Naive thymus-derived CD4-positive, alpha-beta T cell (primary cell): ENCODE measurements at regions of chr13 and their contacts with region 1.

Region 1: GRCh38 chr13:74287724-74288169 is 153.5 kb upstream of the KLF12 start:
- DNase-seq: peak; percentile 40 to 98 (median 90)
- ATAC-seq: peak; percentile 74
- H3K4me3 ChIP-seq: peak overlapping the region; percentile 51
- H3K4me3 Mint-ChIP-seq: peak overlapping the region; percentile 68 to 91 (median 82)
- H3K27ac ChIP-seq: peak overlapping the region; percentile 82
- H3K27ac Mint-ChIP-seq: peak overlapping the region; percentile 79 to 96 (median 94)
- H3K4me1 ChIP-seq: peaks cover 26 to 48% of the 10 kb centered on the region in 2 donors
- H3K4me1 Mint-ChIP-seq: peaks cover 41 to 77% (median 71%) of the 10 kb centered on the region in 7 donors
- H3K27me3 ChIP-seq: no peaks in the 10 kb centered on the region
- H3K27me3 Mint-ChIP-seq: peaks cover 0 to 2% (median 0%) of the 10 kb centered on the region in 5 donors

Region 2: DNA sequence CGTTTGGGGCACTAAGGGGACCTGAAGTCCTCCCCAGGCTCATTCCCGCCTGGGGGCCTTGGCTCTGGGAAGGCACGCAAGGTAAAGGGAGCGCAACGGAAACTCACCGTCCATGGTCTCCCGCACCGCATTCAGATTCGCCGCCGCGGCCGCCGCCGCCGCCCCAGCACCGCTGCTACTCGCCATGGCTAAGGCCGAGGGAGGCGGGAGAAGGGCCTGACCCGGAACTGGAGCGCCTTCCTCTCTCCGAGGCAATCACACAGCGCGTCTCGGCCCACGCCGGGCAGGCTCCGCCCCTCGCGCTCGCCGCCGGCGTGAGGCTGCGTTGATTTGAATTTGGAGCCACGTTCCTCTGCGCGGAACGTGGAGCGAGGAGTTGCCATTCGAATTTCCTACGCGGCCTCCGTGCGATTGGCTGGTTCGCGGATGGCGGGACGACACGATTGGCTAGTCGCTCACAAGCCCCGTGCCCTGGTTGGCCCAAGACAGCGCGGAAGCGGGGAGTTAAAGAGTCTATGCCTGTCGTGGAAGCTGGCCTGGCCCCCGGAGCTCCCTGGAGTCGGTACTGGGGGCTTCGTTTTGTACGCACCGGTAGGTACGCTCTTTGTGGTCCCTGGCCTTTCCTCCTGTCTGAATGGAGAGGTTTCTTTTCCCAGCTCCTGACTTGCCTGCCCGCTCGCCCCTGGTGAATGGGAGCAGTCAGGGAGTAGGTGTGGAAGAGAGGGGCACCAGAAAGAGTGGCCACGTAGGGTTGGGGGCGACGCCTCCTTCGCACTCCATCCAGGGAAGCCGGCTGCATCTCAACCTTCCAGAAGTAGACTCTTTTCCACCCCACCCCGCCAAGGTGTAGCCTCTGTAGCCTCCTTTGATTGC is 1560.1 kb before region 1 on chr13 and contains the starts of genes BORA and MZT1:
- CTCF ChIA-PET with region 1: no interaction called
- POLR2A ChIA-PET with region 1: no interaction called
- intact Hi-C with region 1: loop called in 1 of 2 experiments (anchors 10 kb)
- DNase-seq: peak; percentile 87 to 95 (median 94)
- ATAC-seq: peak; percentile 95
- H3K4me3 ChIP-seq: peak within 1 kb of the TSS; percentile 93
- H3K4me3 Mint-ChIP-seq: peak within 1 kb of the TSS; percentile 85 to 99 (median 95)
- H3K27ac ChIP-seq: peak within 1 kb of the TSS; percentile 73
- H3K27ac Mint-ChIP-seq: peak within 1 kb of the TSS; percentile 85 to 95 (median 91)
- H3K4me1 ChIP-seq: peaks cover 23 to 30% of the 10 kb centered on the region in 2 donors
- H3K4me1 Mint-ChIP-seq: peaks cover 30 to 69% (median 54%) of the 10 kb centered on the region in 7 donors
- H3K27me3 ChIP-seq: no peaks in the 10 kb centered on the region
- H3K27me3 Mint-ChIP-seq: no peaks in the 10 kb centered on the region
- total RNA-seq, gene BORA: 4.7 to 18.0 (median 6.2) TPM
- total RNA-seq, gene MZT1: 4.5 to 14.9 (median 6.3) TPM

Region 3: DNA sequence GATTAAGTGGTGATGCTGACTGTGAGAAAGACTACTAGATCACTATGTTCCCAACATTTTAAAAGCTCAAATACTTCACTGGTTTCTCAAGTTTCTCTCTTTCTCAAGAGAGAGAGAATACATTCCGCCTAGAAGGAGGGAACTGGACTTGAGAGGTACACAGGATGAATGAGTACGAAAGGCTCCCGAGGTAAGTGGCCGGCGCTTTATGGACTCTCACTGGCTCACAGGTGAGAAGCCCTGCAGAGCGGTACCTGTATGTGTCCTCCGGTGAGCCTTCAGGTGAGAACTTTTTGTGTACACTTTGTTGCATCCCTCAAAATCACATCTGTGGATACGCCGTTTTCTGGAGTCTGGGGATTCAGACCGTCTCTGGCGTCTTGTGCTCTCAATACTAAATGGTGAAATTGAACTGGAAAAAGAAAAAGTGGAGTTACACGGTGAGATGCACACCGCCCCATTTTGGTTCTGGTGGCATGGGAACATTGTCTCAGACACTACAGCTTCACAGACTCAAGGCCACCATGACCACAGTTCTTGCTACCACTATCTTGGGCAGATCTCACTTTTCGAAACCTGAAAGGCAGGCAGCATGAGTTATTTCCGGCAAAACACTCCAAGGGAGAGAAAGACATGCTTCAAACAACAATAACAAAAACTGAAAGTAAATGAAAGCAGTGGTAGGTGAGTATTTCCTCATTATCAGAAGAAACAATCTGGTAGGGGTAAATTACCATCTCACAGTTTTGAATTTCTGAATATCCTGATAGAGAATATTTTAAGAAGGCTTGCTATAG is 572.4 kb before region 1 on chr13:
- CTCF ChIA-PET with region 1: interaction called, 4 read pairs
- POLR2A ChIA-PET with region 1: no interaction called
- intact Hi-C with region 1: loop called in 1 of 2 experiments (anchors 1 kb)
- DNase-seq: peak in 8 of 9 donors; percentile 53 to 85 (median 77)
- ATAC-seq: peak; percentile 90
- H3K4me3 ChIP-seq: peak overlapping the region; percentile 7
- H3K4me3 Mint-ChIP-seq: peak overlapping the region; percentile 72 to 86 (median 78)
- H3K27ac ChIP-seq: peak overlapping the region; percentile 67
- H3K27ac Mint-ChIP-seq: peak overlapping the region; percentile 87 to 99 (median 97)
- H3K4me1 ChIP-seq: peaks cover 34 to 43% of the 10 kb centered on the region in 2 donors
- H3K4me1 Mint-ChIP-seq: peaks cover 25 to 80% (median 58%) of the 10 kb centered on the region in 7 donors
- H3K27me3 ChIP-seq: no peaks in the 10 kb centered on the region
- H3K27me3 Mint-ChIP-seq: no peaks in the 10 kb centered on the region

Region 4: DNA sequence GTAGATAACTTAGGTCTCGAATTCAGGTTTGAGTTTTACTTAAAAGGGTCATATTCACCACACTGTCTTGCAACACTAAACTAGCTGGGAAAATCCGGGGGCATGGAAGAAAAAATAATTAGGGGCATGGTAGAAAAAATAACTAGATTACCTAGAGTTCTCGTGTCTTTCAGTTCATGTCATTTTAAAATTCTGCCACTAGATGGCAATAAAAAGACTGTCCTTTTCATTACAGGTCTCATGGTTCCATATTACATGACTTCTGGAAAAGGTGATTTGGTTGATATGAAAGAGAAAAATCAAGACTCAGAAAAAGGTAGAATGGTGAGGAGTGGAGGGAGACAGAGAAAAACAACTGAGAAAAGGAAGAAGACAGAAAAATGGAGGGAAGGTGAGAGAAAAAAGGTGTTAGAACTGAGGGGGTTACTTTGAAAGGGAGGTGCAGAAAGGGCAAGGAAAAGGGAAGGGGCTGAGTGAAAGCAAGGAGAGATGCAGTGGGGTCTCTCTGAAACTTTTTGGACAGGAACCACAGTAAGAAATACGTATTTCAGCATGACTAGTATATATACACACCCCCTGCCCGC is 452.5 kb before region 1 on chr13:
- CTCF ChIA-PET with region 1: interaction called, 26 read pairs
- POLR2A ChIA-PET with region 1: interaction called, 11 read pairs
- intact Hi-C with region 1: loop called (anchors 1 kb)
- DNase-seq: peak in 7 of 9 donors; percentile 16 to 60 (median 54)
- ATAC-seq: peak; percentile 64
- H3K4me3 ChIP-seq: no peak overlapping the region
- H3K4me3 Mint-ChIP-seq: no peak overlapping the region
- H3K27ac ChIP-seq: no peak overlapping the region
- H3K27ac Mint-ChIP-seq: no peak overlapping the region
- H3K4me1 ChIP-seq: peaks cover 7 to 41% of the 10 kb centered on the region in 2 donors
- H3K4me1 Mint-ChIP-seq: peaks cover 5 to 71% (median 43%) of the 10 kb centered on the region in 7 donors
- H3K27me3 ChIP-seq: no peaks in the 10 kb centered on the region
- H3K27me3 Mint-ChIP-seq: no peaks in the 10 kb centered on the region

Region 5: DNA sequence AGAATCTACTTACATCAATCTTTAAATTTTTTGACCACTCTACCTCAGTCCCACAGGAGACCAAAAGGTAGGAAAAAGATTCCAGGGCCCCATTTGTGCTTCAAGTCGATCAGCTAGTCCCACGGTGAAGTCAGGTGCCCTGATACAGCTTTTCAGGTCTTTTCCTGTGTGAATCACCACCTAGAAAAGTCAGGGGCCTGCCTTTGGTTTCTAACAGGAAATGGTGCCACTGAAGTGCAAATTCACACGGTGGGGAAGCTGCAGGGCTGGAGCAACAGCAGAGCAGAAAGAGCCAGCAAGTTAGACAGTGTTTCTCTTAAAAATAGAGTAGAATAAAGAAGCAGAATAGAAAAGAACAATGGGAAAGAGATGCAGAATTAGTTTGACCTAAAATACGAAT is 261.0 kb before region 1 on chr13:
- CTCF ChIA-PET with region 1: interaction called, 3 read pairs
- POLR2A ChIA-PET with region 1: interaction called, 5 read pairs
- intact Hi-C with region 1: loop called (anchors 1 to 5 kb)
- DNase-seq: peak; percentile 22 to 77 (median 68)
- ATAC-seq: peak; percentile 94
- H3K4me3 ChIP-seq: peak overlapping the region; percentile 21
- H3K4me3 Mint-ChIP-seq: peak overlapping the region; percentile 77 to 92 (median 84)
- H3K27ac ChIP-seq: peak overlapping the region; percentile 77
- H3K27ac Mint-ChIP-seq: peak overlapping the region; percentile 80 to 97 (median 94)
- H3K4me1 ChIP-seq: peaks cover 51 to 59% of the 10 kb centered on the region in 2 donors
- H3K4me1 Mint-ChIP-seq: peaks cover 36 to 97% (median 94%) of the 10 kb centered on the region in 7 donors
- H3K27me3 ChIP-seq: no peaks in the 10 kb centered on the region
- H3K27me3 Mint-ChIP-seq: no peaks in the 10 kb centered on the region

Region 6: DNA sequence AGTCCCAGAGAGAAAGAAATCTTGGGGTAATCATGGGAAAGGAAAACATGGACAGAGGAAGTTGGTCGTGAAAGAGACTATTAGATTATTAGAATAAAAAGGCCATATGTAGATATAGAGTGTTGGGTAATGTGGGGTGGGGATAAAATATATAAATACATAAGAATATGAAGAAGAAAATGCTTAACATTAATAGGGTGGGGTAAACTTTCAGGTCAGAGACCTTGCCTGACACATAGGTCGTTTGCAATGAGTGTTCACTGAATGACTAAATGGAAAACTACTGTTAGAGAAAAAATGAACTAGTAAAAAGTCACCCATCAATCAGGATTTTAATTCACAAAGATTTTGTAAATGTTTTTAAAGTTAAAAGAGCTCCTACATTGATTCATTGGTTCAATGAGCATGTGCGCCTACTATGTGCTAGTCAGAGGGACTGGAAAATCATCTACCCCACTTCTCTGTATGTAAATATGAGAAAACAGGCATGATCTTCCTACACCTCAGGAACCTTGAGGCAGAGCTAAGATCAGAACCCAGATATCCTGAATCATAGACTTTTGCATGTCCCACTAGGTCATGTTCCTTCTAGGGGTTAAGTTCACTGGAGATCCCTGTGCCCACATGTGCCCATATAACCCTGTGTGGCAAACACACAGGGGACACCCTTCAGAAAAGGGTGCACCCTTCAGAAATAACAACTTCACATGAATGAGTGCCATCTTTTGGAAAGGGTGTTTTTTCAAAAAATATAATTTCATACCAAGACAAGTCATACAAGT is 129.0 kb before region 1 on chr13:
- CTCF ChIA-PET with region 1: no interaction called
- POLR2A ChIA-PET with region 1: no interaction called
- intact Hi-C with region 1: no loop called
- DNase-seq: no peak
- ATAC-seq: no peak
- H3K4me3 ChIP-seq: no peak overlapping the region
- H3K4me3 Mint-ChIP-seq: no peak overlapping the region
- H3K27ac ChIP-seq: no peak overlapping the region
- H3K27ac Mint-ChIP-seq: peak overlapping the region in 1 of 9 donors; percentile 13
- H3K4me1 ChIP-seq: no peaks in the 10 kb centered on the region
- H3K4me1 Mint-ChIP-seq: peaks cover 0 to 10% (median 0%) of the 10 kb centered on the region in 7 donors
- H3K27me3 ChIP-seq: no peaks in the 10 kb centered on the region
- H3K27me3 Mint-ChIP-seq: peaks cover 0 to 12% (median 0%) of the 10 kb centered on the region in 5 donors

Region 7: DNA sequence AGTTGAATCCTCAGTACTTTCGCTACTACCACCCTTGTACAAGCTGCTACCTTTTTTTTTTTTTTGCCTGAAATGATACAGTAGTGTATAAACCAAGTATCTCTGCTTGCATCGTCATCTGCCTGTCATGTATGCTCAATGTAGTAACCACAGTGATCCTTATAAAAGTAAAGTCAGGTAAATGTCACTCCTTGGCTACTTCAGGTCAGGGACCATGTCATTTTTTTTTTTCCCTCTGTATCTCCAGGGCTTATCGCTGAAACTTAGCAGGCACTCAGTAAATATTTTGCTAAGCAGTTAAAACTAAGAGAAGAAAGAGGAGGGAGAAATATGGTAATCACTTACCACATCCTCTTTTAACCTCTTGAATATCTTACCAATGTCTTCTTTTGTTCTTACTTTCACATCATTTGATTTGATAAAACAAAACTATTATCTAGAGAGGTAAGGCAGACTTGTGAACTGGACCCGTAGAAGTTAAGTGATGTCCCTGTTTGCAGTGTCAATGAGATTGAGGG is 56.7 kb before region 1 on chr13:
- CTCF ChIA-PET with region 1: interaction called, 13 read pairs
- POLR2A ChIA-PET with region 1: interaction called, 28 read pairs
- intact Hi-C with region 1: loop called (anchors 1 to 2 kb)
- DNase-seq: peak in 7 of 9 donors; percentile 37 to 78 (median 69)
- ATAC-seq: peak; percentile 85
- H3K4me3 ChIP-seq: peak overlapping the region; percentile 61
- H3K4me3 Mint-ChIP-seq: peak overlapping the region; percentile 72 to 87 (median 84)
- H3K27ac ChIP-seq: peak overlapping the region; percentile 70
- H3K27ac Mint-ChIP-seq: peak overlapping the region; percentile 86 to 97 (median 90)
- H3K4me1 ChIP-seq: peaks cover 0 to 29% of the 10 kb centered on the region in 2 donors
- H3K4me1 Mint-ChIP-seq: peaks cover 8 to 62% (median 52%) of the 10 kb centered on the region in 7 donors
- H3K27me3 ChIP-seq: no peaks in the 10 kb centered on the region
- H3K27me3 Mint-ChIP-seq: no peaks in the 10 kb centered on the region

Region 8: GRCh38 chr13:75326173-75327134 is 1038.7 kb after region 1 on chr13:
- CTCF ChIA-PET with region 1: interaction called, 5 read pairs
- POLR2A ChIA-PET with region 1: no interaction called
- intact Hi-C with region 1: loop called (anchors 1 to 2 kb)
- DNase-seq: peak; percentile 19 to 88 (median 82)
- ATAC-seq: peak; percentile 94
- H3K4me3 ChIP-seq: peak overlapping the region; percentile 71
- H3K4me3 Mint-ChIP-seq: peak overlapping the region; percentile 90 to 97 (median 94)
- H3K27ac ChIP-seq: peak overlapping the region; percentile 87
- H3K27ac Mint-ChIP-seq: peak overlapping the region; percentile 92 to 99 (median 98)
- H3K4me1 ChIP-seq: peaks cover 4 to 24% of the 10 kb centered on the region in 2 donors
- H3K4me1 Mint-ChIP-seq: peaks cover 22 to 63% (median 55%) of the 10 kb centered on the region in 7 donors
- H3K27me3 ChIP-seq: no peaks in the 10 kb centered on the region
- H3K27me3 Mint-ChIP-seq: no peaks in the 10 kb centered on the region